ENCODE measurements at regions of chr5 and their contacts with region 1.

Region 1: GRCh38 chr5:24923400-24923799 is 278.6 kb upstream of the CDH10 start:
- DNase-seq: no peak
- ATAC-seq: no peak
- H3K4me3 ChIP-seq: no peak overlapping the region
- H3K27ac ChIP-seq: no peak overlapping the region
- H3K4me1 ChIP-seq: no peaks in the 10 kb centered on the region
- H3K27me3 ChIP-seq: no peaks in the 10 kb centered on the region
- CTCF ChIP-seq: no peak
- EP300 ChIP-seq: no peak
- POLR2A ChIP-seq: no peak
- RAD21 ChIP-seq: no peak

Region 2: GRCh38 chr5:24742334-24742733 is 181.1 kb before region 1 on chr5:
- CTCF ChIA-PET with region 1: no interaction called
- POLR2A ChIA-PET with region 1: no interaction called
- in situ Hi-C with region 1: no loop called
- intact Hi-C with region 1: no loop called
- DNase-seq: no peak
- ATAC-seq: no peak
- H3K4me3 ChIP-seq: no peak overlapping the region
- H3K27ac ChIP-seq: no peak overlapping the region
- H3K4me1 ChIP-seq: no peaks in the 10 kb centered on the region
- H3K27me3 ChIP-seq: no peaks in the 10 kb centered on the region
- CTCF ChIP-seq: no peak
- EP300 ChIP-seq: no peak
- POLR2A ChIP-seq: no peak
- RAD21 ChIP-seq: no peak

Region 3: DNA sequence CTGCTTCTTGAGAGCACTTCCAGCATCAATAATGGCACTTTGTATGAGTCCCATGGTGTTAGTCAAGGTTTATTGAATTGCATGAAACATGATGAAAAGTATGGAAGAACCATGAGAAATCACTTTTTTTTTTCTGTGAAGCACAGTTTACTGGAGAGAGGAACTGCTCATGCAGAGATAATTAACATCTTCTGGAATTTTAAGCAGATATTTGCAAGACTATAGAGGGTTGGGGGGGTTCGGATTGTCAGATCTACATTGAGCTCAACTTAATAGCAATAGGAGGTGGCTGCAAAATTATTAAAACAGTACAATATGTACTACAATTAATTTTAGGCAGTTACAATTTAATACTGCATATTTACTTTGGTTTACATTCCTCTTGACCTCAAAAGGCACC is 74.2 kb before region 1 on chr5:
- CTCF ChIA-PET with region 1: no interaction called
- POLR2A ChIA-PET with region 1: no interaction called
- in situ Hi-C with region 1: loop called (anchors 10 kb)
- intact Hi-C with region 1: no loop called
- DNase-seq: no peak
- ATAC-seq: no peak
- H3K4me3 ChIP-seq: no peak overlapping the region
- H3K27ac ChIP-seq: no peak overlapping the region
- H3K4me1 ChIP-seq: no peaks in the 10 kb centered on the region
- H3K27me3 ChIP-seq: no peaks in the 10 kb centered on the region
- CTCF ChIP-seq: no peak
- EP300 ChIP-seq: no peak
- POLR2A ChIP-seq: no peak
- RAD21 ChIP-seq: no peak

Region 4: DNA sequence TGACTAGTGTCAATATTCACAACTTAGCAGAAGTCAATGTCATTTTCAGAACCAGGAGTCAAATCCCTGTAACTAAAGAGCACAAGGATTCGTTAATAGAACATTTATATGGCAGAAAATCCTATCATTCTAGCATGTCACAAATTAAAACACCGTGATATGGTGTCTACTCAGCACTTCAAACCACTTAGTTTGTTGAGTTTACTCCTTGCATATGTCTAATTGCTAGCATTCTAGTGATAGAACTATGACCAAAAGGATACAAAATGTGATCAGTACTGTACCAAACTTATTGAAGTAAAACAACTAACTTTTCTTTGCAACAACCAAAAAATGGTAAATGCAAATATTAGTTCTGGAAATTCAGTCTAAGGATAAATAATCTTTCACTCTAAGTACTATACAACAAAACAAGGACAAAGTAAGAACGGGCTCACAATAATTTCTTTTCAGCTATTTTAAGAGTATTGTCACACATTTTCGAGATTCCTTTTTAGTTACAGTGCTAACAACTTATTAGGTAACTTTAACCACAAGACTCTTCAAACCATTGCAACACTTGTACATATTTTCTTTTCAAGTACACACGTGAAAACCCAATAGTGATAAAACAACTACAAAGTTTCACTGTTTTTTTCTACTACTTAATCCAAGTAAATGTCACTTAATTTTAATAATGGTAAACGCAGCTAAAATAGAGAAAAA is 566.6 kb after region 1 on chr5:
- CTCF ChIA-PET with region 1: no interaction called
- POLR2A ChIA-PET with region 1: no interaction called
- in situ Hi-C with region 1: no loop called
- intact Hi-C with region 1: no loop called
- DNase-seq: no peak
- ATAC-seq: no peak
- H3K4me3 ChIP-seq: no peak overlapping the region
- H3K27ac ChIP-seq: no peak overlapping the region
- H3K4me1 ChIP-seq: no peaks in the 10 kb centered on the region
- H3K27me3 ChIP-seq: no peaks in the 10 kb centered on the region
- CTCF ChIP-seq: no peak
- EP300 ChIP-seq: no peak
- POLR2A ChIP-seq: no peak
- RAD21 ChIP-seq: no peak

Measured in K562 (cell line).